ENCODE measurements at regions of chr6 and their contacts with region 1.

Region 1: DNA sequence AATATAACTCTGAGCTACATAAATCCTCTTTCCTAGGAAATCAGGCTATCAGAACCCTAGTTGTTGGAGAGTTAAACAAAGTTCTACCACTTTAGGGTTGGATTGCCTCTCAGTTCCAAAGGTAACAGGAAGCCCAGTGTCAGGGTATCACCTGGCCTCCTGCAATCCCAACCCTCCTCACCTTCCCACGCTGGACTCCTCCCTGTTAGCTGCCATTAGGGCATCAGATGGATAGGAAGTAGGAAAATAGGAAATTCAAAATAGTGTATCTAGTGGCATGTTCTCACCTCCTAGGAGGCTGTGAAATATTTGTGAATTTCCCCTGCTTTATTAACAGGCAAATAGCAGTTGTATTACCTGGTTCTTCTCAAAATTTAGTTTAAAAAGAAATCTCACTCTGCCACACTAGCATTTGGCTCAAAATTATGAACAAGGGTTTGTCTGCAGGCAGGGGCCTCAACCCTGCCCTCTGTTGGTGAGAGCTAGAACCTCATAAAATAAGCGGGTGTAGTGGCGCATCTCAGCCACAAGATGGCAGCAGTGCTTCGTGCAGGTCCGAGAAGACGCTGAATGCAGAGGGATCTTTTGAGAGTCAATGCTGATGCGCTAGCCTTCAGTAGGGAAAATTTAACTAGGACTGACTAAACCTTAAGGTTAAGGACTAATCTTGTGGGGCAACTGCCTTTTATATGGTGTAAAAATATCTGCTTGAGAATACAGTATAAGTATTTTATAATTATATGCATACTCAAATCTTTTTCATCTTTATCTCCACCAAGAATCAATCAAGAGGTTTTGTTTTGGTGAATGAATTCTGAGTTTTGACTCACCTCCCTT is 209.8 kb upstream of the KCNQ5 start:
- DNase-seq: peak; percentile 85
- H3K4me3 Mint-ChIP-seq: no peak overlapping the region
- H3K27ac Mint-ChIP-seq: no peak overlapping the region
- H3K4me1 Mint-ChIP-seq: no peaks in the 10 kb centered on the region
- H3K27me3 Mint-ChIP-seq: no peaks in the 10 kb centered on the region

Region 2: DNA sequence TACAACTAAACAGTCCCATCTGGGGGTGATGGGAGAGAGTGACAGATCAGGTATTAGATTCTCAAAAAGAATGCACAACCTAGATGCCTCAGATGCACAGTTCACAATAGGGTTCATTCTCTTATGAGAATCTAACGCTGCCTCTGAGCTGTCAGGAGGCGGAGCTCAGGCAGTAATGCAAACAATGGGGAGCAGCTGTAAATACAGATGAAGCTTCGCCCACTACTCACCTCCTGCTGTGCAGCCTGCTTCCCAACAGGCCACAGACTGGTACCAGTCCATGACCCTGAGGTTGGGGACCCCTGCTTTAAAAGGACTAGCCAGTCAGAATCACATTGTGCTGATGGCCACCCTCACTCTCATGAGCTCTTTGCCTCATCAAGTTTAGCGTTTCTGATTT is 37.2 kb before region 1 on chr6:
- CTCF ChIA-PET with region 1: no interaction called
- POLR2A ChIA-PET with region 1: no interaction called
- intact Hi-C with region 1: no loop called
- DNase-seq: no peak
- H3K4me3 Mint-ChIP-seq: no peak overlapping the region
- H3K27ac Mint-ChIP-seq: no peak overlapping the region
- H3K4me1 Mint-ChIP-seq: no peaks in the 10 kb centered on the region
- H3K27me3 Mint-ChIP-seq: no peaks in the 10 kb centered on the region

Region 3: GRCh38 chr6:72390548-72390947 is 21.5 kb before region 1 on chr6:
- CTCF ChIA-PET with region 1: interaction called, 10 read pairs
- POLR2A ChIA-PET with region 1: no interaction called
- intact Hi-C with region 1: no loop called
- DNase-seq: no peak
- H3K4me3 Mint-ChIP-seq: no peak overlapping the region
- H3K27ac Mint-ChIP-seq: no peak overlapping the region
- H3K4me1 Mint-ChIP-seq: no peaks in the 10 kb centered on the region
- H3K27me3 Mint-ChIP-seq: peaks cover 2% of the 10 kb centered on the region

Region 4: GRCh38 chr6:72425003-72425681 is 13.1 kb after region 1 on chr6:
- CTCF ChIA-PET with region 1: interaction called, 28 read pairs
- POLR2A ChIA-PET with region 1: no interaction called
- intact Hi-C with region 1: no loop called
- DNase-seq: no peak
- H3K4me3 Mint-ChIP-seq: no peak overlapping the region
- H3K27ac Mint-ChIP-seq: no peak overlapping the region
- H3K4me1 Mint-ChIP-seq: no peaks in the 10 kb centered on the region
- H3K27me3 Mint-ChIP-seq: peaks cover 9% of the 10 kb centered on the region

Measured in activated CD4-positive, alpha-beta memory T cell treated with anti-CD3 and anti-CD28 coated beads for 36 hours (primary cell).